PC-9 (cell line): ENCODE measurements at regions of chr19 and their contacts with region 1.

Region 1: DNA sequence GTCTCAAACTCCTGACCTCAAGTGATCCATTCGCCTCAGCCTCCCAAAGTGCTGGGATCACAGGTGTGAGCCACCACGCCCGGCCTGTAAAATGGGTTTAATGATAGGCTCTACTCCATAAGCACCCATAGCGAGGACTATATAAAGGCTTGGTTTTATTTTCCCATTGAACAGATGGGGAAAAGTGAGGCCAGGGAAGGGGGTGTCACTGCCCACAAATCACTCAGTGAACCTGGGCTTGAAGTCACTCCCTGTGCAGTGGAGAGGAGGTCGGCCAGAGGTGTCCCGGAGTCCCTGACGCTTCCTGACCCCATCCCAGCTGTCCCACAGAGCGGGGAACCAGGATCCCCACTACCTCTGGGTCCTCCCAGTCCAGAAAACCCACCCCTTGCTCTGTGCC is 14.9 kb downstream of the TLE2 start:
- DNase-seq: no peak
- H3K4me3 ChIP-seq: no peak overlapping the region
- H3K27ac ChIP-seq: no peak overlapping the region
- H3K4me1 ChIP-seq: no peaks in the 10 kb centered on the region
- H3K27me3 ChIP-seq: no peaks in the 10 kb centered on the region
- CTCF ChIP-seq: no peak

Region 2: GRCh38 chr19:2962045-2962561 is 52.0 kb before region 1 on chr19:
- CTCF ChIA-PET with region 1: no interaction called
- POLR2A ChIA-PET with region 1: no interaction called
- intact Hi-C with region 1: no loop called
- DNase-seq: peak; percentile 33 to 36
- H3K4me3 ChIP-seq: no peak overlapping the region
- H3K27ac ChIP-seq: no peak overlapping the region
- H3K4me1 ChIP-seq: no peaks in the 10 kb centered on the region
- H3K27me3 ChIP-seq: no peaks in the 10 kb centered on the region
- CTCF ChIP-seq: peak; percentile 85

Region 3: DNA sequence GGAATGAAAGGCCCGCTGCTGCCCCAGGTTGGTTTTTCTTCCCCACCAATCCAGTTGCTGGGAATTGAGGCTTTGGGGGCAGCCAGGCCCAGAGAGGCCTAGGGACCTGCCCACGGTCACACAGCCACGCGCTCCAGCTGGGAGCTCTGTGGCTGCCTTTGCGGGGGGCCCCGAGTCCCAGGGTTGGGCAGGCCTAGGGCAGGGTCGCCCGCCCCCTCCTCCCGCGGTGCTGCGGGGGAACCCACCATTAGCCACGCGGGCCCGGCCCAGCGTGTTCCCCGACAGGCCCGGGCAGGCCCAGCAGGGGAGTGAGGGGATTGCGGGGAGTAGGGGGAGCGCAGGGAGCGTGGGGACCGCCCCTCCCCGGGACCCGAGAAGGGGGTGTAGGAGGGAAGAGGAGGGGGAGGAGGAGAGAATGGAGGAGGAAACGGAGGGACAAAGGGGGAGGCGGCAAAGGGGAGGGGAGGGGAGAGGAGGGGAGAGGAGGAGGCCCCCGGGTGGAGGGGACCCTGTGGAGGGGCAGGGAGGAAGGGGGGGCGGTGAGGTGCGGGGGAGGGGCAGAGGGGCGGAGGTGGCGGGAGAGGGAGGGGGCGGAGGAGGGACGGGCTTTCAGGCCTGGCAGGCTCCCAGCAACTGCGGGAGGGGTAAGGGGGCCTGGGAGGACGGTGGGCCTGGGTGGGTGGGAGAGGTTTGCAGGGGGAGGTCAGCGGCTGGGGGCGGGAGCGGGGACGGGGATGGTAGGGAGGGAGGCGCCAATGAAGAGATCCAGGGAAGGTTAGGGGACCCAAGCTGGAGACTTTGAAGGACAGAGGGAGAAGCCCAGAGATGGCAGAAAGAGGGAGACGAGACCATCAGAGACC is 27.9 kb after region 1 on chr19:
- CTCF ChIA-PET with region 1: no interaction called
- POLR2A ChIA-PET with region 1: no interaction called
- intact Hi-C with region 1: loop called (anchors 1 kb)
- DNase-seq: no peak
- H3K4me3 ChIP-seq: no peak overlapping the region
- H3K27ac ChIP-seq: no peak overlapping the region
- H3K4me1 ChIP-seq: no peaks in the 10 kb centered on the region
- H3K27me3 ChIP-seq: no peaks in the 10 kb centered on the region
- CTCF ChIP-seq: no peak